H1 (cell line): ENCODE measurements at regions of chr9 and their contacts with region 1.

Region 1: DNA sequence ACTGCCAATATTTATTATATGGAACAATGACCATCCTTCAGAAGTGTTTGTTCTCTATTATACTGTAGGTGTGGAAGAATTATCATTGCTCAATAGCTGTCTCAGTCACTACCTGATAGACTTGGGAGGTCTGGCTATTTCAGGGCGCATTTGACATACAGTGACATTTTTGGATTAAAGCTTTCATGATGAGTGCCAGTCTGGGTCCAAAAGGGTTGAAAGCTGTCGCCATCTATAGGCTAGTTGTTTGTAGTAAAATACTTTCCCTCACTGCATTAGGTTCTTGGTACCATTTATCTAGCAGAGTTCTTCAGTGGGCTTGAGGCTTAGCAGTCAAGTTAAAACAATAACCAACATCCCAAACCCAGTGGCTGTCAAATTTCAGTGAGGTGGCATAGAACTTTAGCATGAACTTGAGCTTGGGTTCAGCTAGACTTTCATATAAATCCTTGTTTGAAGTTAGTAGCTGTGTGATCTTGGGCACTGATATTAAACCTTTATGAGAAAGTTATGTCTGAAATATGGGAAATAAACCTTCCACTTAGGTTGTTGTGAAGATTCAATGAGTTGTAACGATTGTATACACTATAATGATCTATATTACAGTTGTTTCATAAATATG is 110.5 kb upstream of the CDKN2B start:
- DNase-seq: no peak
- H3K4me3 ChIP-seq: no peak overlapping the region
- H3K27ac ChIP-seq: no peak overlapping the region
- H3K4me1 ChIP-seq: peaks cover 2 to 8% (median 6%) of the 10 kb centered on the region in 4 experiments; a peak in 5 of 7 replicates
- H3K27me3 ChIP-seq: no peaks in the 10 kb centered on the region; a peak in 1 of 7 replicates
- CTCF ChIP-seq: peak in 2 of 3 experiments; percentile 59 to 74; a peak in 3 of 4 replicates
- EP300 ChIP-seq: no peak
- POLR2A ChIP-seq: no peak
- RAD21 ChIP-seq: peak; percentile 75 to 83

Region 2: GRCh38 chr9:22022396-22022795 is 97.3 kb before region 1 on chr9:
- CTCF ChIA-PET with region 1: interaction called, 10 read pairs
- POLR2A ChIA-PET with region 1: no interaction called
- DNase-seq: no peak
- H3K4me3 ChIP-seq: no peak overlapping the region
- H3K27ac ChIP-seq: no peak overlapping the region
- H3K4me1 ChIP-seq: no peaks in the 10 kb centered on the region
- H3K27me3 ChIP-seq: no peaks in the 10 kb centered on the region
- CTCF ChIP-seq: no peak
- EP300 ChIP-seq: no peak
- POLR2A ChIP-seq: no peak
- RAD21 ChIP-seq: no peak

Region 3: GRCh38 chr9:22037954-22038690 is 81.5 kb before region 1 on chr9:
- CTCF ChIA-PET with region 1: interaction called, 17 read pairs
- POLR2A ChIA-PET with region 1: no interaction called
- DNase-seq: no peak
- H3K4me3 ChIP-seq: no peak overlapping the region
- H3K27ac ChIP-seq: no peak overlapping the region
- H3K4me1 ChIP-seq: peaks cover 0 to 4% (median 0%) of the 10 kb centered on the region in 4 experiments; a peak in 1 of 7 replicates
- H3K27me3 ChIP-seq: no peaks in the 10 kb centered on the region
- CTCF ChIP-seq: no peak; a peak in 1 of 4 replicates
- EP300 ChIP-seq: no peak
- POLR2A ChIP-seq: no peak
- RAD21 ChIP-seq: peak; percentile 35 to 49

Region 4: GRCh38 chr9:22052376-22052945 is 67.2 kb before region 1 on chr9:
- CTCF ChIA-PET with region 1: interaction called, 12 read pairs
- POLR2A ChIA-PET with region 1: no interaction called
- DNase-seq: no peak
- H3K4me3 ChIP-seq: no peak overlapping the region
- H3K27ac ChIP-seq: no peak overlapping the region
- H3K4me1 ChIP-seq: no peaks in the 10 kb centered on the region
- H3K27me3 ChIP-seq: no peaks in the 10 kb centered on the region
- CTCF ChIP-seq: no peak
- EP300 ChIP-seq: no peak
- POLR2A ChIP-seq: no peak
- RAD21 ChIP-seq: no peak

Region 5: GRCh38 chr9:22105005-22105722 is 14.5 kb before region 1 on chr9:
- CTCF ChIA-PET with region 1: interaction called, 32 read pairs
- POLR2A ChIA-PET with region 1: no interaction called
- DNase-seq: no peak
- H3K4me3 ChIP-seq: no peak overlapping the region
- H3K27ac ChIP-seq: no peak overlapping the region
- H3K4me1 ChIP-seq: peaks cover 0 to 7% (median 2%) of the 10 kb centered on the region in 4 experiments; a peak in 3 of 7 replicates
- H3K27me3 ChIP-seq: no peaks in the 10 kb centered on the region; a peak in 1 of 7 replicates
- CTCF ChIP-seq: no peak
- EP300 ChIP-seq: no peak
- POLR2A ChIP-seq: no peak
- RAD21 ChIP-seq: no peak

Region 6: DNA sequence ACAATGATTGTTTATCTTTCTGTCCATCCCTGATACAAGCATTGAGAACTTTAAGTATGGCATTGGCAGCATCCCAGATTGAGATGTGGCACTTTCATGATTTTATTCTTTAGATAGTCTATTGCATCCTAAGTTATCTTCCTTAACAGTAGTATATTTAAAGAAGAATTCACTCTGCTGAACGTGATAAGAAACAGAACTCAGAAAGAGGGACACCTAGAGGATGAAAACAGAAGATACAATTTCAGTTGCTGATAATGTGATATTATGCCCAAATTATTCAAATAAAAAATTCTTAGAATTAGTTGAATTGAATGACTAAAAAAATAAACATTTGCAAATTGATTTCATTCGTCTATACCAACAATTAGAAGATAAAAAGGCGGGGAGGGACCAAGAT is 108.9 kb after region 1 on chr9:
- CTCF ChIA-PET with region 1: no interaction called
- POLR2A ChIA-PET with region 1: no interaction called
- DNase-seq: no peak
- H3K4me3 ChIP-seq: no peak overlapping the region
- H3K27ac ChIP-seq: no peak overlapping the region
- H3K4me1 ChIP-seq: no peaks in the 10 kb centered on the region
- H3K27me3 ChIP-seq: no peaks in the 10 kb centered on the region
- CTCF ChIP-seq: no peak; a peak in 1 of 4 replicates
- EP300 ChIP-seq: no peak
- POLR2A ChIP-seq: no peak
- RAD21 ChIP-seq: no peak